ENCODE measurements at regions of chr1 and their contacts with region 1.

Region 1: GRCh38 chr1:168280296-168280927 is at the start of gene TBX19:
- DNase-seq: no peak
- H3K4me3 ChIP-seq: no peak within 1 kb of the TSS
- H3K27ac ChIP-seq: no peak within 1 kb of the TSS
- H3K4me1 ChIP-seq: peaks cover 7% of the 10 kb centered on the region
- H3K27me3 ChIP-seq: no peaks in the 10 kb centered on the region
- CTCF ChIP-seq: no peak
- total RNA-seq, gene TBX19: 0.67 to 0.68 TPM

Region 2: DNA sequence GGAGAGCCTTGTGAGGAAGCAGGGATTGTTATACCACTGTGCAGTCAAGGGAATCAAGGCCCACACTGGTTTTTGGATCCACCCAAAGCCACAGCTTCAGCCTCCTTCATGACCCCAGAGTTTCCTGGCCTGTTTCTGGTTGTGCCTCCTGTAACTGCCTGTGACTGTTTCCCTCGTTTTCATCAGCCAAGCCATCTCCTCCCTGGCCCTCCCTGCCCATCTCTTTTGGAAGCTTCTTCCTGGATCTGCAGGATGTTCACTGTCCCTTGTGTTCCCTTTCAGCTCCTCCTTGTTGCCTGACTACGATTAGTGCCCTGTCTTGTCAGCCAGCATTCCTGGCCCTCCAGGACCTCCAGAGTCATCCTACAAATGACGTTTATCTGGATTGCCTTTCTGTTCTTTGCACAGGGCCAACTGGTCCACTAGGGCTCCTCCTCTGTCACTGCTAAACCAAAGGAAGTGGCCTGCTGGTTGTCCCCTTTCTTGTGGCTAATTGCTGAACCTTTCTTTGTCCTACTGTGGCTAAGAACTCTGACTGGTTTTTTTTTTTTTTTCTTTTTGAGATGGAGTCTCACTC is 36.7 kb before region 1 on chr1:
- CTCF ChIA-PET with region 1: no interaction called
- dilution Hi-C with region 1: loop called (anchors 5 kb)
- in situ Hi-C with region 1: no loop called
- intact Hi-C with region 1: no loop called
- DNase-seq: no peak
- H3K4me3 ChIP-seq: no peak overlapping the region
- H3K27ac ChIP-seq: no peak overlapping the region
- H3K4me1 ChIP-seq: no peaks in the 10 kb centered on the region
- H3K27me3 ChIP-seq: no peaks in the 10 kb centered on the region
- CTCF ChIP-seq: no peak

Measured in mammary epithelial cell (primary cell).